Caco-2 (cell line): ENCODE measurements at regions of chr14 and their contacts with region 1.

Region 1: GRCh38 chr14:35814371-35815005 is 5.4 kb upstream of the RALGAPA1 start:
- DNase-seq: peak; percentile 65 to 77
- H3K4me3 ChIP-seq: no peak overlapping the region
- H3K4me3 Mint-ChIP-seq: no peak overlapping the region
- H3K27ac Mint-ChIP-seq: no peak overlapping the region
- H3K4me1 ChIP-seq: no peaks in the 10 kb centered on the region
- H3K4me1 Mint-ChIP-seq: peaks cover under 1% of the 10 kb centered on the region
- H3K27me3 ChIP-seq: no peaks in the 10 kb centered on the region
- H3K27me3 Mint-ChIP-seq: peaks cover 4% of the 10 kb centered on the region
- CTCF ChIP-seq: peak; percentile 59 to 63

Region 2: GRCh38 chr14:35088514-35088913 is 726.0 kb before region 1 on chr14:
- CTCF ChIA-PET with region 1: no interaction called
- POLR2A ChIA-PET with region 1: no interaction called
- intact Hi-C with region 1: no loop called
- DNase-seq: no peak
- H3K4me3 ChIP-seq: no peak overlapping the region
- H3K4me3 Mint-ChIP-seq: no peak overlapping the region
- H3K27ac Mint-ChIP-seq: peak overlapping the region; percentile 71
- H3K4me1 ChIP-seq: peaks cover 16% of the 10 kb centered on the region
- H3K4me1 Mint-ChIP-seq: peaks cover 10% of the 10 kb centered on the region
- H3K27me3 ChIP-seq: no peaks in the 10 kb centered on the region
- H3K27me3 Mint-ChIP-seq: no peaks in the 10 kb centered on the region
- CTCF ChIP-seq: no peak

Region 3: GRCh38 chr14:35438910-35439713 is 375.4 kb before region 1 on chr14:
- CTCF ChIA-PET with region 1: interaction called, 5 read pairs
- POLR2A ChIA-PET with region 1: no interaction called
- intact Hi-C with region 1: loop called (anchors 10 kb)
- DNase-seq: no peak
- H3K4me3 ChIP-seq: no peak overlapping the region
- H3K4me3 Mint-ChIP-seq: no peak overlapping the region
- H3K27ac Mint-ChIP-seq: no peak overlapping the region
- H3K4me1 ChIP-seq: peaks cover 13% of the 10 kb centered on the region
- H3K4me1 Mint-ChIP-seq: no peaks in the 10 kb centered on the region
- H3K27me3 ChIP-seq: no peaks in the 10 kb centered on the region
- H3K27me3 Mint-ChIP-seq: no peaks in the 10 kb centered on the region
- CTCF ChIP-seq: peak; percentile 54 to 66

Region 4: DNA sequence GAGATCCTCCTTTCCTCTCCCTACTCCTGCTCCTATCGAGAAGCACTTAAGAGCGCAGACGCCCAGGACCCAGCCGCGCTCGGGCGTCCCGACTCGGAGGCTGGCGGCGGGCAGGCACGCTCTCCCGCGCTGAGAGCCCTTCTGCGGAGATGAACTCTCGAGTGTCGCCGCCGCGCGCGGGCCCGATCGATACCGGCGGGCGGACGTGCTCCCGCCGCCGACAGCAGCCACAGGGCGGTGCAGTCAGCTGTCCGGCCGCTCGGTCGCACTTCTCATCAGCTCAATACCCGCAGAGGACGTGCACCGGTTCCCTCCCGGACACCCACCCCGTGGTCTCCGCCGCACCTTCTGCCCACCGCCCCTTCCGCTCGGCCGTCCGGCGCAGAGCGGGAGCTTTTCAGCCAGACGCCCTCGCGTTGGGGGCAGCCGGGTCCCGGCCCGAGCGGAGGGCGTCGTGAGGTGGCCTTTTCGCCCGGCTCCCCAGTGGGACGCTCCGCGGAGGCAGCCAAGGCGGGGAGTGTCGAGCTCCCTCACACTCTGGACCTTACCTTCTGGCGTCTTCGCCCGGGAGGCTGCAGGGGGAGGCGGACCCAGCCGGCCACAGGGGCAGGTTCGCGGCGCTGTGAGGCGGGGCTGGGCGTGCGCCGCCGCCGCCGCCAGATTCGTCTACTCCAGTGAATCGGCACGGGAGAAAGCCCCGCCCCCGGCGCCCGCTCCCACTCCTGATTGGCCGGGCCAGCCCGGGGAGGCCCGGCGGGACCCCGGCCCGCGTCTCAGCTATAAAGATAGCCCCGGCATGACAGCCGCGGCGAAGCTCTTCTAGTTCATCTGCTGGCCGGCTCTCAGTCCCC is 280.9 kb before region 1 on chr14 and contains the start of gene INSM2:
- CTCF ChIA-PET with region 1: interaction called, 6 read pairs
- POLR2A ChIA-PET with region 1: no interaction called
- intact Hi-C with region 1: loop called (anchors 5 kb)
- DNase-seq: peak; percentile 87 to 93
- H3K4me3 ChIP-seq: peak within 1 kb of the TSS; percentile 62
- H3K4me3 Mint-ChIP-seq: peak within 1 kb of the TSS; percentile 88
- H3K27ac Mint-ChIP-seq: no peak within 1 kb of the TSS
- H3K4me1 ChIP-seq: peaks cover 12% of the 10 kb centered on the region
- H3K4me1 Mint-ChIP-seq: peaks cover 7% of the 10 kb centered on the region
- H3K27me3 ChIP-seq: no peaks in the 10 kb centered on the region; the same call in 1 of the 2 replicates
- H3K27me3 Mint-ChIP-seq: peaks cover 26% of the 10 kb centered on the region
- CTCF ChIP-seq: peak in 1 of 2 experiments; percentile 2
- total RNA-seq, gene INSM2: 0.14 TPM in 1 of 2 replicates, not detected in the other

Region 5: DNA sequence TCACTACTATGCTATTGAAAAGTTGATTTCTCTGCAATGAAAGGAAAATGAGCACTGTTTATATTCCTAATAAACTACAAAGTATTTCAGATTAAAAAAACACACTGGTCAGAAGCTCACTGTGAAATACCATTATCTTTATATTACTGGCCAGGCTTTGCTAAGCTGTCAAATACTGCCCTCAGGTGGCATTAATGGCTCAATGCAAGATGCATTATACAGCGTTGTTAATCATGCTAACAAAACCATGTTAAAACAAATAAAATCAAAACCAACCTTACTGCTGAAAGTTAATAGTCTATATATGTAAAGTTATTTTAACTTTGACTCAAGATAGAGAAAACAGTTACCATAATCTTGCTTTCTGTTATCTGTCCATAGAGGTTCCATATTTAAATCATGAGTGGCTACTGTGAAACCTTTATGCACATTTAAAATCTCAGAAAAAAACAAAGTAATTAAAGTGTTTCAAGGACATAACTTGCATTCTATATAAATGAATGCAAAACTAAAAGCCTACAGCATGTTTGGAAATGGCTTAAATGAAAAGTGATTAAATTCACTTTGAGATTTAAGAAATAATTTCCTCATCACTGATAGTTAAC is 127.1 kb before region 1 on chr14:
- CTCF ChIA-PET with region 1: interaction called, 5 read pairs
- POLR2A ChIA-PET with region 1: no interaction called
- intact Hi-C with region 1: loop called (anchors 5 kb)
- DNase-seq: peak; percentile 47 to 59
- H3K4me3 ChIP-seq: no peak overlapping the region
- H3K4me3 Mint-ChIP-seq: no peak overlapping the region
- H3K27ac Mint-ChIP-seq: no peak overlapping the region
- H3K4me1 ChIP-seq: no peaks in the 10 kb centered on the region
- H3K4me1 Mint-ChIP-seq: no peaks in the 10 kb centered on the region
- H3K27me3 ChIP-seq: no peaks in the 10 kb centered on the region
- H3K27me3 Mint-ChIP-seq: no peaks in the 10 kb centered on the region
- CTCF ChIP-seq: peak; percentile 73 to 76

Region 6: DNA sequence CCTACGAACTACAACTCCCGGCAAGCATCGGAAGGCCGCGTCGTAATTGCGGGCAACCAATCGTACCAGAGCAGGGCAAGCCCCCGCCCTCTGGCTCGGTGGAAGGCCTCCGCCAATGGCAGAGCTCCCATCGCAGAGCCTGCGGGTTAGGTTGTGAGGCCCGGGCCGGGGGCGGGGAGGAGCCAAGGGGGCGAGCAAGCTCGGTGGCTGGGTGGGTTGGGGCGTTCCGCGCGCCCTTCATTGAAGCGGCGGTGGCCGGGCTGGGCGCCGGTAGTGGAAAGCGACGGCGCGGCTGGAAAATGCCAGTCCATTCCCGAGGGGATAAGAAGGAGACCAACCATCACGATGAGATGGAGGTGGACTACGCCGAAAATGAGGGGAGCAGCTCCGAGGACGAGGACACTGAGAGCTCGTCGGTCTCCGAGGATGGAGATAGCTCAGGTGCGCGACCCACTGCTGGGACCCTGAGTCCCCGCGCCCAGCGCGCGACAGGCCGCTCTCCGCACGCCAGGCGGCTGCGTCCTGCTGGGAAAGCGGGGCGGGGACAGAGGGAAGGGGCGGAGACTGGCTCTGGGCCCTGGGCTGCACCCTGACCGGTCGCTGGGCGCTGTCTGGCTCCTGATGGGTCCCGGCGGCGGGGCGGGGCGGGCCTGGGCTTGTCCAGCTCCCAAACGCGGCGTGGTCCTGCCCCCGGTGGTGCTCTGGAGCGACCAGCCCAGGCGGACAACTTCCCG is 11.9 kb after region 1 on chr14 and contains the start of gene BRMS1L:
- CTCF ChIA-PET with region 1: interaction called, 10 read pairs
- POLR2A ChIA-PET with region 1: interaction called, 13 read pairs
- intact Hi-C with region 1: loop called (anchors 2 kb)
- DNase-seq: peak; percentile 98 to 99
- H3K4me3 ChIP-seq: peak within 1 kb of the TSS; percentile 97
- H3K4me3 Mint-ChIP-seq: peak within 1 kb of the TSS; percentile 78
- H3K27ac Mint-ChIP-seq: peak within 1 kb of the TSS; percentile 81
- H3K4me1 ChIP-seq: peaks cover 6% of the 10 kb centered on the region; the same call in 1 of the 2 replicates
- H3K4me1 Mint-ChIP-seq: peaks cover 7% of the 10 kb centered on the region
- H3K27me3 ChIP-seq: no peaks in the 10 kb centered on the region
- H3K27me3 Mint-ChIP-seq: no peaks in the 10 kb centered on the region
- CTCF ChIP-seq: no peak
- total RNA-seq, gene BRMS1L: 10.4 and 11.4 TPM in 2 replicates